ENCODE measurements at regions of chr3 and their contacts with region 1.

Region 1: DNA sequence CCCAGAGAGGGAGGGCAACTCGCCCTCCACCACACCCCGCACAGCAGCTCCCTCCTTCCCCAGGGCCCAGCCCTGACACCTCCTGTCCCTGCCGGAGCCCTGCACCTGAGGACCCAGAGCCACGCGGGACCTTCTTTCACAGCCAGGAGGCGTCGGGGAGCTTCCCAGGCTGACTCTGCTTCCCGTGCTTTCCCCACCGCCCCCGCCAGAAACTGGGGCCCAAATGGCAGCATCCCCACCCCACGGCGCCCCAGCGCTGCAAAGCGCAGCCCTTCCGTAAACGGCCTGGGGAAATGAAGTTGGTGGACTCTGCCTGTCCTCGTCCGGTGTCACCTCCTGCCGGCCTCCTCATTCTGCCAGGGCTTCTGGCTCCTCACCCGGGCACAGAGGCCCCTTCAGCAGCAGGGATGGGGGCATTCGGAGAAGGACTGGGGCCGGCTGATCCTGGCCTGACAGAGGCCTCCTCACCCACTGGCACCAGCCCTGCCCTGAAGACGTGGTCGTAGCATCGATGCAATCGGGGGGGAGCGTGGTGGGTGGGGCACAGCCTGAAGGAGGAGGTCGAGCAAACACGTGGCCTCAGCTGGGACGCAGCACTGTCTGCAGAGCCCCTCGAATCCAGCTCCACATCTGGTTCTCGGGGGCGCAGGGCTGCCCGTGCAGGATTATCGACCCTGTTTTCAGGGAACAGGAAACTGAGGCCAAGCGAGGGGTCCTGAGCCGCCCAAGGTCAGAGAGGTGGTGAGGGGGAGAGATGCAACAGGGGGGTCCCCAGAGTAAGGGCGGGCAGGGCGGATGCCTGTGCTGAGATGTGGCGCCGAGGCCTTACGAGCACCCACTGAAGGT is 235.4 kb downstream of the XXYLT1 start:
- DNase-seq: peak; percentile 74

Region 2: GRCh38 chr3:194985031-194985578 is 50.5 kb before region 1 on chr3:
- intact Hi-C with region 1: no loop called
- DNase-seq: peak; percentile 93

Region 3: DNA sequence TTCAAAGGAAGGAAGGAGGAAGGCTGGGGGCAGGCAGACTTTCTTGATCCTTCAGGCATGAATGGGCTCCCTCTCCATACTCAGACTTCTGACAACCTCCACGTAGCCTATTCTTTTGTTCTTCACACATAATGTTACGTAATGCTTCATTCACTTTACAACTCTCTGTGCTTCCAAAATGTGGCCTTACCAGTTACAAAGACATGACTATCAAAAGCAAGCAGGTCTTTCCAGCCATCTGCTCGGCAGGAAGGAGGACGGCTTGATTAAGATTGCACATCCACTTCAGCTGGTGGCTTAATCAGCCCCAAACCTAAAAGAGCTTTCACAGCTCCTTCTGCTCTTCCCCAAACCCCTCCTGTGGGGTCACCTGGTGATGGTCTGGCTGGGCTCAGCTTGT is 27.8 kb before region 1 on chr3:
- intact Hi-C with region 1: loop called in 1 of 2 experiments (anchors 2 kb)
- DNase-seq: peak; percentile 22

Measured in posterior vena cava (tissue), 2 donors.